ENCODE measurements at regions of chr7 and their contacts with region 1.

Region 1: GRCh38 chr7:1579481-1580421 is 9.9 kb upstream of the PSMG3 start:
- DNase-seq: no peak
- ATAC-seq: peak; percentile 100
- H3K4me3 ChIP-seq: no peak overlapping the region
- H3K27ac ChIP-seq: no peak overlapping the region
- H3K4me1 ChIP-seq: no peaks in the 10 kb centered on the region
- H3K27me3 ChIP-seq: no peaks in the 10 kb centered on the region
- CTCF ChIP-seq: peak; percentile 83 to 91 (median 89)
- EP300 ChIP-seq: no peak
- POLR2A ChIP-seq: no peak
- RAD21 ChIP-seq: peak; percentile 92

Region 2: GRCh38 chr7:1758028-1758858 is 178.5 kb after region 1 on chr7:
- CTCF ChIA-PET with region 1: interaction called, 4 read pairs
- POLR2A ChIA-PET with region 1: no interaction called
- RAD21 ChIA-PET with region 1: no interaction called
- SMC1A ChIA-PET with region 1: no interaction called
- in situ Hi-C with region 1: no loop called
- intact Hi-C with region 1: loop called (anchors 1 kb)
- DNase-seq: no peak
- ATAC-seq: peak; percentile 51; the same call in 2 of the 3 replicates
- H3K4me3 ChIP-seq: no peak overlapping the region
- H3K27ac ChIP-seq: no peak overlapping the region
- H3K4me1 ChIP-seq: peaks cover 13% of the 10 kb centered on the region; the same call in 1 of the 2 replicates
- H3K27me3 ChIP-seq: no peaks in the 10 kb centered on the region
- CTCF ChIP-seq: peak; percentile 37 to 44 (median 38)
- EP300 ChIP-seq: no peak
- POLR2A ChIP-seq: no peak
- RAD21 ChIP-seq: peak; percentile 24; the same call in 1 of the 2 replicates

Measured in GM12878 (cell line).